ENCODE measurements at regions of chr7 and their contacts with region 1.

Region 1: GRCh38 chr7:923108-924041 is 31.1 kb downstream of the ADAP1 start:
- DNase-seq: peak; percentile 74
- ATAC-seq: peak; percentile 36

Region 2: DNA sequence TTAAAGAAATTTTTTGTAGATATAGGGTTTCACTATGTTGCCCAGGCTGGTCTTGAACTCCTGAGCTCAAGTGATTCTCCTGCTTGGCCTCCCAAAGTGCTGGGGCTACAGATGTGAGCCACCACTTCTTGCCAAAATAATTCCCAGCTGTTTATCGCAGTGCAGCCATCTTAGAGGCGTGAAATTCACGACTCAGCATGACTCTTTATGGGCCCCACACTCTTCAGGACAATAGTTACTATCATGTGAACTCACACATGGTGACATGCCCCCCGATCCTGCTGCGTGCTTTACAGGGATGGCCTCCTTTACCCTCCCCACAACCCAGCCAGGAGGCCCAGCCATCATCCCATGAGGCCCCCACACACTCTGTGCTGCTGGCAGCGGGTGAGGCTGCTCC is 47.4 kb after region 1 on chr7:
- intact Hi-C with region 1: loop called (anchors 1 kb)
- DNase-seq: no peak
- ATAC-seq: no peak